ENCODE measurements at regions of chr17 and their contacts with region 1.

Region 1: GRCh38 chr17:51000835-51001638 is 119.6 kb downstream of the SPAG9 start:
- DNase-seq: peak; percentile 47
- ATAC-seq: peak; percentile 71
- H3K4me3 Mint-ChIP-seq: no peak overlapping the region
- H3K27ac Mint-ChIP-seq: no peak overlapping the region
- H3K4me1 Mint-ChIP-seq: no peaks in the 10 kb centered on the region
- H3K27me3 Mint-ChIP-seq: no peaks in the 10 kb centered on the region

Region 2: DNA sequence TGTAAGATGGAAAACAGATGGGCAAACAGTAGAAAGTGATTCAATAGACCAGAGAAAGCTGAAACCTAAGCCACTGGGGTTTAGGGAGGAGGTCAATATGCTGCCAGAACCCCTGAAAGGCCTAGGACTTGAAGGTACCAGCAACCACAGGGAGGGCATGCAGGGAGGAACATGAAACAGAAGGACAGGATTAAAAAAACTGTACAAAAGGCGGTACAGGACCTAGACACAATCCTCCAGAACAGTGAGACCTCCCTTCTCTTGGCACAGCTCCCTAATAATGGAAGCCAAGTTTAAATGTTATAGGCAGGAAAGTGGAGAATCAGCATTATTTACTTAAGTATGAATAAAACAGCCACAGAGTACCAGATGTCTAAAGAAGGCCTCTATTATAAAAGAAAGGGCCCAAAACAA is 14.1 kb after region 1 on chr17:
- CTCF ChIA-PET with region 1: interaction called, 17 read pairs
- POLR2A ChIA-PET with region 1: interaction called, 3 read pairs
- DNase-seq: no peak
- ATAC-seq: no peak
- H3K4me3 Mint-ChIP-seq: no peak overlapping the region
- H3K27ac Mint-ChIP-seq: no peak overlapping the region
- H3K4me1 Mint-ChIP-seq: no peaks in the 10 kb centered on the region
- H3K27me3 Mint-ChIP-seq: no peaks in the 10 kb centered on the region

Region 3: DNA sequence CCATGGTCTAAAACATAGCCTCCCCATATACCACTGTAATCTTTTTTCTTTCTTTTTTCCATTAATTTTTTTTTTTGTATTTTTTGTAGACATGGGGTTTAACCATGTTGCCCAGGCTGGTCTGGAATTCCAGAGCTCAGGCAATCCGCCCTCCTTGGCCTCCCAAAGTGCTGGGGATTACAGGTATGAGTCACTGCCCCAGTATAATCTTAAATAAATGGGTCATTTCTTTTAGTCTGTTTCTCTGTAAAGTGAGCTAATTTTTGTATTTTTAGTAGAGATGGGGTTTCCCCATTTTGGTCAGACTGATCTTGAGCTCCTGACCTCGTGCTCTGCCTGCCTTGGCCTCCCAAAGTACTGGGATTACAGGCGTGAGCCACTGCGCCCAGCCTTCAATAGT is 146.6 kb after region 1 on chr17:
- CTCF ChIA-PET with region 1: interaction called, 131 read pairs
- POLR2A ChIA-PET with region 1: interaction called, 3 read pairs
- DNase-seq: no peak
- ATAC-seq: no peak
- H3K4me3 Mint-ChIP-seq: no peak overlapping the region
- H3K27ac Mint-ChIP-seq: no peak overlapping the region
- H3K4me1 Mint-ChIP-seq: peaks cover 4% of the 10 kb centered on the region
- H3K27me3 Mint-ChIP-seq: no peaks in the 10 kb centered on the region

Measured in activated CD8-positive, alpha-beta T cell treated with anti-CD3 and anti-CD28 coated beads, Interleukin-2, amount 10 ng/mL, durations not matched to agents 7 days and 5 days (primary cell).